Panc1 (cell line): ENCODE measurements at regions of chr5 and their contacts with region 1.

Region 1: GRCh38 chr5:55583578-55583977 is 48.8 kb upstream of the PLPP1 start:
- DNase-seq: no peak
- ATAC-seq: no peak
- H3K4me3 ChIP-seq: no peak overlapping the region
- H3K27ac ChIP-seq: no peak overlapping the region
- H3K4me1 ChIP-seq: no peaks in the 10 kb centered on the region
- H3K27me3 ChIP-seq: no peaks in the 10 kb centered on the region
- CTCF ChIP-seq: no peak

Region 2: GRCh38 chr5:55650386-55650785 is 66.8 kb after region 1 on chr5:
- CTCF ChIA-PET with region 1: no interaction called
- POLR2A ChIA-PET with region 1: interaction called, 15 read pairs
- in situ Hi-C with region 1: no loop called
- intact Hi-C with region 1: no loop called
- DNase-seq: no peak
- ATAC-seq: no peak
- H3K4me3 ChIP-seq: no peak overlapping the region
- H3K27ac ChIP-seq: no peak overlapping the region
- H3K4me1 ChIP-seq: no peaks in the 10 kb centered on the region
- H3K27me3 ChIP-seq: no peaks in the 10 kb centered on the region
- CTCF ChIP-seq: no peak

Region 3: DNA sequence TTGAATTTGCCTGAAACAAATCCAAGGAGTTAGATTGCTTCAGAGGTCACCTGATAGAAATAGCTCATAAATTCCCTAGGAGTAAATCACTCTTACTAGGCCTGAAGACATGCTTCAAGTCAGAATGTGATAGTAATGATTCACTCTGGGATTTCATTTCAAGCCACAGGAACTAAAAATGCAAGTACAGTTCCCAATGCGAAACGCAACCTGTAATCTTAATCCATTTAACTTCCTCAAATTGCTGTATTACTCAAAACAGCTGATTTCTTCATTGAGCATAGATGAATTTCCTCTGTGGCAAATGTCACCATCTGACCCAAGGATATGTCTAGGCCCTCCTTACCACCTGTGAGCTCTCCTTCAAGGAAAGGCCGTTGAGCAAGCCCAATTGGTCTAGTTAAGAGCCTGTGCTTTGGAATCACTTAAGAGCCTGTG is 443.3 kb after region 1 on chr5:
- CTCF ChIA-PET with region 1: no interaction called
- POLR2A ChIA-PET with region 1: no interaction called
- in situ Hi-C with region 1: no loop called
- intact Hi-C with region 1: no loop called
- DNase-seq: no peak
- ATAC-seq: no peak
- H3K4me3 ChIP-seq: no peak overlapping the region
- H3K27ac ChIP-seq: no peak overlapping the region; the same call in 1 of the 2 replicates
- H3K4me1 ChIP-seq: no peaks in the 10 kb centered on the region
- H3K27me3 ChIP-seq: no peaks in the 10 kb centered on the region
- CTCF ChIP-seq: no peak